Prostate gland (tissue), 2 donors: ENCODE measurements at regions of chr3 and their contacts with region 1.

Region 1: DNA sequence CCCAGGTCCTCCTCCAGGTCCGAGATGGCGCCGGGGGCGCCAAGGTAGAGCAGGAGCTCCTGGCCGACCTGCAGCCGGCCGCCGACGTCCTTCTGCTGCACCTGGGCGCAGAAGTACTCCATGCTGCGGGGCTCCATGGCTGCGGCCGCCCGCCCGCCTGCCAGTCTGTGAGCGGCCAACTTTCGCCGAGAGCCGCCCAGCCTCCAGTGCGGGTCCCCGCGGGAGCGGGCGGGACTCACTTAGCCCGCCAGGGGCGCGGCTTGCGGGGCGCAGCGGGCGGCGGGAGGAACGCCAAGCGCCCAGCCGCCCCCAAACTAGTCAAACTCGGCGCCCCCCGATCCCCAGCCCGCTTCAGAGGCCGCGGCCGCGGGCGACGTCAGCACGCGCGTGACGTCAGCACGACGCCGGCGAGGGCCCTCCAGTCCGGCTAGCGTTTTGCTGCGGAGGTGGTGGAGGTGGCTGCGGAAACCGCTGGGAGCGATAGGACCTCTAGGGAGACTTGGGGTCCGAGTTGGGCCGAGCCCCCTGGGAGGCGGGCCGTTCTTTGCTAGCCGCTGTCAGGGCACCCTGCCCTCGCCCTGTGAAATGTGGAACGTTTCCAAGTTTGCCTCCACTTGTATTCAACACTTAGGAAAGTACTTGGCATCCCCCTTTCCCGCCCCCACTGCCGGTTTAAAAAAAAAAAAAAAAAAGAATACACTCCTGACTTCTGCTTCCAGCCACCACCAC is at the start of gene CLASP2:
- DNase-seq: peak; percentile 79
- H3K4me3 ChIP-seq: peak within 1 kb of the TSS; percentile 83 to 91
- H3K27ac ChIP-seq: peak within 1 kb of the TSS; percentile 94 to 99
- H3K4me1 ChIP-seq: no peaks in the 10 kb centered on the region
- H3K27me3 ChIP-seq: no peaks in the 10 kb centered on the region
- CTCF ChIP-seq: peak in 1 of 4 experiments; percentile 13
- POLR2A ChIP-seq: peak; percentile 72
- total RNA-seq, gene CLASP2: 34.5 to 73.2 TPM

Region 2: DNA sequence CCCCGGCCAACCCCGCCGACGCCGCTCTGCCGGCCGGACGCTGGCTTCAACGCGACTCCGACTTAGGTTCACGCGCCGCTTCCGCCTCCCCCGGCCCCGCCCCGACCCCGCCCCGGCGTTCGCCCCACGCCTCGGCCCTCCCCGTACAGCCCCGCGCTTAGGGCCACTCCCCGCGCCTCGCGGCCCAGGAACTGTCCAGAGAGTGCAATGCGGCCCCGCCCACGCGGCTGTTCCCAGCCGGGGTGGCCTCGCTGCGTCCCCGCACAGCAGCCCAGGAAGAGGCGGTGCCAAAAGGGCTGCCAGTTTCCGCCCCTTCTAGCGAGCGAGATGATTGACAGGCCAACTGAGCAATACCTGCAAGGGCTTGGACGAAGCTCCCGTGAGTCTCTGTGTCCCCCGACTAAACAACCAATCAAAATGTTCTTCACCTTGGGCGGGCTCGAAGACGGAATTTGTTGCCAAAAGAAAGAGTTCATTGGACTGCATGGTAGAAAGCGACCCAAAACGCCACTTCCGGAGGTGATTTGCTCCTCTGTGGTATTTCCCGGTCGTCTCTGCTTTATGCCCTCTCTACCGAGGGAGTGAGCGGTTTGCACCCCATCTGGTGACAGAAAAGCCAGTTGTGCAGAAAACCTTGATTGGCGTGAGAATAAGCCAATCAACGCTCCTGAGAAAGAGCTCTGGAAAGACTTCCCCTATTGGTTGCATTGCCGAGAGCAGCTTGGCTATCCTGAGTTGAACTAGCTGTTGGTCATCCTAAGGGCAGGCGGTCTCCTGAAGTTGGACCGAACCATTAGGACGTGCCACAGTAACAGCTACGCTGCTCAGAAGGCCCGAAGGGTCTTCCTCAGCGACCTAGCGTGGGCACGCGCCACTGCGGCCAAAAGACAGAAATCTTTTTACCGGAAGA is 277.5 kb before region 1 on chr3 and contains the start of gene UBP1:
- intact Hi-C with region 1: loop called (anchors 2 kb)
- DNase-seq: peak; percentile 99
- H3K4me3 ChIP-seq: peak within 1 kb of the TSS; percentile 61 to 73
- H3K27ac ChIP-seq: peak within 1 kb of the TSS; percentile 88 to 92
- H3K4me1 ChIP-seq: no peaks in the 10 kb centered on the region
- H3K27me3 ChIP-seq: no peaks in the 10 kb centered on the region
- CTCF ChIP-seq: peak in 2 of 4 experiments; percentile 26 to 49
- POLR2A ChIP-seq: peak; percentile 79
- total RNA-seq, gene UBP1: 52.3 to 57.2 TPM

Region 3: GRCh38 chr3:33592999-33593398 is 125.0 kb before region 1 on chr3:
- intact Hi-C with region 1: no loop called
- DNase-seq: no peak
- H3K4me3 ChIP-seq: no peak overlapping the region
- H3K27ac ChIP-seq: no peak overlapping the region
- H3K4me1 ChIP-seq: no peaks in the 10 kb centered on the region
- H3K27me3 ChIP-seq: no peaks in the 10 kb centered on the region
- CTCF ChIP-seq: no peak
- POLR2A ChIP-seq: no peak

Region 4: GRCh38 chr3:33624756-33625155 is 93.3 kb before region 1 on chr3:
- intact Hi-C with region 1: no loop called
- DNase-seq: no peak
- H3K4me3 ChIP-seq: no peak overlapping the region
- H3K27ac ChIP-seq: no peak overlapping the region
- H3K4me1 ChIP-seq: no peaks in the 10 kb centered on the region
- H3K27me3 ChIP-seq: no peaks in the 10 kb centered on the region
- CTCF ChIP-seq: no peak
- POLR2A ChIP-seq: no peak

Region 5: GRCh38 chr3:33636125-33636850 is 81.7 kb before region 1 on chr3:
- intact Hi-C with region 1: loop called (anchors 2 kb)
- DNase-seq: peak; percentile 6
- H3K4me3 ChIP-seq: no peak overlapping the region
- H3K27ac ChIP-seq: no peak overlapping the region
- H3K4me1 ChIP-seq: no peaks in the 10 kb centered on the region
- H3K27me3 ChIP-seq: no peaks in the 10 kb centered on the region
- CTCF ChIP-seq: peak; percentile 18 to 72 (median 50)
- POLR2A ChIP-seq: no peak

Region 6: GRCh38 chr3:33658991-33659848 is 58.8 kb before region 1 on chr3:
- intact Hi-C with region 1: loop called (anchors 2 kb)
- DNase-seq: peak; percentile 35
- H3K4me3 ChIP-seq: peak overlapping the region; percentile 15 to 25
- H3K27ac ChIP-seq: peak overlapping the region; percentile 58 to 63
- H3K4me1 ChIP-seq: no peaks in the 10 kb centered on the region
- H3K27me3 ChIP-seq: no peaks in the 10 kb centered on the region
- CTCF ChIP-seq: no peak
- POLR2A ChIP-seq: no peak

Region 7: GRCh38 chr3:33787328-33788009 is 69.4 kb after region 1 on chr3:
- intact Hi-C with region 1: loop called (anchors 5 kb)
- DNase-seq: peak; percentile 79
- H3K4me3 ChIP-seq: no peak overlapping the region
- H3K27ac ChIP-seq: no peak overlapping the region
- H3K4me1 ChIP-seq: no peaks in the 10 kb centered on the region
- H3K27me3 ChIP-seq: no peaks in the 10 kb centered on the region
- CTCF ChIP-seq: peak in 3 of 4 experiments; percentile 65 to 67 (median 66)
- POLR2A ChIP-seq: no peak